Activated T-helper 2 cell treated with anti-CD3 and anti-CD28 coated beads, Interferon-gamma antibody, Interleukin-2, Interleukin-4, amounts not matched to agents 10 μg/mL and 5 μg/mL and 100 μg/mL, durations not matched to agents 14 hours and 24 hours and 36 hours (primary cell): ENCODE measurements at regions of chr6 and their contacts with region 1.

Region 1: DNA sequence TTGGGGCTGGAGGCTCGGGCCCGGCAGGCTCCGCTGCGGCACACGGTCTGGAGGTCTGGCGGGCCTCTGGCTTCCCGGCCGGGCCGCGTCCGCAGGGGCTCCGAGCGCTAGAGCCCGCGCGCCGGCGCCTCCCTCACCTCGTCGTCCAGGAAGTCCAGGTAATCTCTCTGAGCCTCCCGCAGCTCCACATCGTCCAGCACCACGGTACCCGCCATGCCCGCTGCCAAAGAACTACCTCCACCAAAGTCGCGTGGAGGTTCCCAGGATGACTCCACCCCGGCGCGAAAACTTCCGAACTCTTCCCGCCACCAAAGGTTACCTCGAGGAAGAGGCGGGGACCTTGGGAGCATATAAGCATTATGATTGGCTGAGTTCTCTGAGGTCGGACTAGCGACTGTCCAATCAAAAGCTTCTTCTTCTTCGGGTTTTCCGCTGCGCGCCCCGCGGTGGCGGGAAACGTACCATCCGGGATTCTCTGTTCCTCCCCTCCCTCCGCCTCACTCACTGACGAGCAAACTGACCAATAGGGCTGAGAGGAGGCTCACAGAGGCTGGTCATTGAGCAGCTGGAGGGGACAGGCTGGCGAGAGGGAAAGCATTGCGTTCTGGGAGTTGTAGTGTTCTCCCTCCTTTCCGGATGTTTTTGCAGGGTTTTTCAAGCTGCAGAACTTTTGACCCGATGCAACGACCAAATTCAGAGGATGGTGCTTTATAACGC is at the start of gene MCM3:
- DNase-seq: peak; percentile 98
- H3K4me3 Mint-ChIP-seq: no peak within 1 kb of the TSS
- H3K27ac Mint-ChIP-seq: no peak within 1 kb of the TSS
- H3K4me1 Mint-ChIP-seq: peaks cover 44% of the 10 kb centered on the region
- H3K27me3 Mint-ChIP-seq: no peaks in the 10 kb centered on the region
- total RNA-seq, gene MCM3: 213 TPM in 2 replicates

Region 2: DNA sequence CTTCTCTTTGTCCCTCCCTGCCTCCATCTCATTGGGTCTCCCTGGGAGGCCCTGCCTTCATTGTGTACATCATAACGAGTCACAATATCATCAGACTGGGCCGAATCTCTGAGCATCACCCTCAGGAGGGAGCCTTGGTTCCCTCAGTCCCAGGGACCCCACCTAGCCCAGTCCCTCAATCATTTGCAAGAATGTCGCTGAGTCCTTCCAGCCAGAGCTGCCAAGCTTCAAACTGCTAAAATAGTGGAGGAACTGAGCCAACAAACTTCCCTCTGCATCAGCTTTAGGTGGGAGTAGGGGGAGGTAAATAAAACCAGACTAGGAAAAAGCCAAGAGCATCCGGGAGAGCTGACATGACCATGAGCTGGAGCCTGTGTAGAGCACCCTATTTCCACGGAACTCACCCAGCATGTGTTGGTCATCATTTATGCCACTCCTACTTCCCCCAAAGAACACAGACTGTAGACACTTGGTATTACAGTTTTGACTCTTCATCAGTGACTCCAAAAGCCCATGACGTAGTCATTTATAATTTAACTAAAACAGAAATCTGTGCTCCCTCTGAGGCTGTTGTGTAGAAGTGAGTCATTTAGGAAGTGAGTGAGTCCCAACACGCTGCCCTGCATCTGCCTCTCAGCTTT is 127.2 kb before region 1 on chr6:
- intact Hi-C with region 1: loop called (anchors 1 kb)
- DNase-seq: peak; percentile 13
- H3K4me3 Mint-ChIP-seq: peak overlapping the region; percentile 10
- H3K27ac Mint-ChIP-seq: peak overlapping the region; percentile 96
- H3K4me1 Mint-ChIP-seq: peaks cover 53% of the 10 kb centered on the region
- H3K27me3 Mint-ChIP-seq: peaks cover 8% of the 10 kb centered on the region

Region 3: GRCh38 chr6:52263709-52264540 is 20.7 kb before region 1 on chr6:
- intact Hi-C with region 1: loop called (anchors 2 kb)
- DNase-seq: peak; percentile 66
- H3K4me3 Mint-ChIP-seq: no peak overlapping the region
- H3K27ac Mint-ChIP-seq: no peak overlapping the region
- H3K4me1 Mint-ChIP-seq: peaks cover 6% of the 10 kb centered on the region
- H3K27me3 Mint-ChIP-seq: no peaks in the 10 kb centered on the region

Region 4: DNA sequence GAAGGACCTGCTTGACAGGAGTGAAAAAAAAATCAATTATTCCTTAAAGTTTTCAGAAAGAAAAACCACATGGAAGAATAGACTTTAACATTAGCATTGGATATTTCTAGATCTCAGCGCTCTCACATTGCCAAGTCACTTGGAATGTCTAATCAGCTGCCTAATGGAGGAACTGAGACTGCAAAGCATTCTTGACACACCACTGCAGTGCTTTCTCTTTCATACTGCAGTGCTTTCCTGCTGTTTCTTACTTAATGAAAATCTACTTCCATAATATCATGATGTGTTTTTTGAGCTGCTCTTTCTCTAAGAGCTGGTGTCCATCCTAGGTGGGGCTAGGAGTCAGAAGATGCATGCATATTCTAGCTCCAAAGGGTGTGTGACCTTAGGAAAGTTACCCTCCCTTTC is 20.4 kb after region 1 on chr6:
- intact Hi-C with region 1: loop called (anchors 1 kb)
- DNase-seq: no peak
- H3K4me3 Mint-ChIP-seq: no peak overlapping the region
- H3K27ac Mint-ChIP-seq: peak overlapping the region; percentile 70
- H3K4me1 Mint-ChIP-seq: peaks cover 52% of the 10 kb centered on the region
- H3K27me3 Mint-ChIP-seq: no peaks in the 10 kb centered on the region

Region 5: GRCh38 chr6:52389626-52390360 is 105.2 kb after region 1 on chr6:
- intact Hi-C with region 1: loop called (anchors 1 kb)
- DNase-seq: peak; percentile 55
- H3K4me3 Mint-ChIP-seq: peak overlapping the region; percentile 59
- H3K27ac Mint-ChIP-seq: peak overlapping the region; percentile 84
- H3K4me1 Mint-ChIP-seq: peaks cover 78% of the 10 kb centered on the region
- H3K27me3 Mint-ChIP-seq: no peaks in the 10 kb centered on the region

Region 6: GRCh38 chr6:52577022-52577777 is 292.6 kb after region 1 on chr6 and contains the start of gene TRAM2:
- intact Hi-C with region 1: loop called (anchors 5 kb)
- DNase-seq: peak; percentile 70
- H3K4me3 Mint-ChIP-seq: peak within 1 kb of the TSS; percentile 85
- H3K27ac Mint-ChIP-seq: peak within 1 kb of the TSS; percentile 77
- H3K4me1 Mint-ChIP-seq: peaks cover 37% of the 10 kb centered on the region
- H3K27me3 Mint-ChIP-seq: peaks cover 2% of the 10 kb centered on the region
- total RNA-seq, gene TRAM2: 4.7 TPM in 2 replicates

Region 7: GRCh38 chr6:52984247-52984646 is 699.6 kb after region 1 on chr6:
- intact Hi-C with region 1: loop called (anchors 5 kb)
- DNase-seq: peak; percentile 43
- H3K4me3 Mint-ChIP-seq: peak overlapping the region; percentile 37
- H3K27ac Mint-ChIP-seq: peak overlapping the region; percentile 90
- H3K4me1 Mint-ChIP-seq: peaks cover 73% of the 10 kb centered on the region
- H3K27me3 Mint-ChIP-seq: no peaks in the 10 kb centered on the region